Caco-2 (cell line): ENCODE measurements at regions of chr5 and their contacts with region 1.

Region 1: DNA sequence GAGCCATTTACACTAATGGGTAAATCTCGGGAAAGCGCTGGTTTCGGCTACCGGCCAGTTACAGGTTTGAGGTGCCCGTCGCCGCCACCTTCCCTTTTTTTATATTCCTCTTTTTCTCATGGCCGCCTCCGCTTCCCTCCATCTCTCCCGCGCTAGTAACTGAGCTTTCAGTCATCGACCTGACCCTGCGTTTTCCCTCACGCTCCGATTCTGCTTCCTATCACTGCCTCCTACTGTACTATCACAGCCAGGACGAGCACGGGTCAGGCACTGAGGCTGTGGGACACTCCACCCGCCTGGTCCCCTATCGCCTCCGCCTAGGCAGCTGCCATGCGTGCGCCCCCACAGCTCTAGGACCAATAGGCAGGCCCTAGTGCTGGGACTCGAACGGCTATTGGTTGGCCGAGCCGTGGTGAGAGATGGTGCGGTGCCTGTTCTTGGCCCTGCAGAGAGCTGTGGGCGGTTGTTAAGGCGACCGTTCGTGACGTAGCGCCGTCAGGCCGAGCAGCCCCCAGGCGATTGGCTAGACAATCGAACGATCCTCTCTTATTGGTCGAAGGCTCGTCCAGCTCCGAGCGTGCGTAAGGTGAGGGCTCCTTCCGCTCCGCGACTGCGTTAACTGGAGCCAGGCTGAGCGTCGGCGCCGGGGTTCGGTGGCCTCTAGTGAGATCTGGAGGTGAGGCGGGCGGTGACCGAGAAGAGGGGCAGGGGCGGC is at the start of gene HMGCR:
- DNase-seq: peak; percentile 99 to 100
- H3K4me3 ChIP-seq: peak within 1 kb of the TSS; percentile 89
- H3K4me3 Mint-ChIP-seq: no peak within 1 kb of the TSS
- H3K27ac Mint-ChIP-seq: no peak within 1 kb of the TSS
- H3K4me1 ChIP-seq: peaks cover 28% of the 10 kb centered on the region
- H3K4me1 Mint-ChIP-seq: peaks cover 14% of the 10 kb centered on the region
- H3K27me3 ChIP-seq: no peaks in the 10 kb centered on the region
- H3K27me3 Mint-ChIP-seq: no peaks in the 10 kb centered on the region
- CTCF ChIP-seq: peak in 1 of 2 experiments; percentile 59
- total RNA-seq, gene HMGCR: 164 and 167 TPM in 2 replicates

Region 2: DNA sequence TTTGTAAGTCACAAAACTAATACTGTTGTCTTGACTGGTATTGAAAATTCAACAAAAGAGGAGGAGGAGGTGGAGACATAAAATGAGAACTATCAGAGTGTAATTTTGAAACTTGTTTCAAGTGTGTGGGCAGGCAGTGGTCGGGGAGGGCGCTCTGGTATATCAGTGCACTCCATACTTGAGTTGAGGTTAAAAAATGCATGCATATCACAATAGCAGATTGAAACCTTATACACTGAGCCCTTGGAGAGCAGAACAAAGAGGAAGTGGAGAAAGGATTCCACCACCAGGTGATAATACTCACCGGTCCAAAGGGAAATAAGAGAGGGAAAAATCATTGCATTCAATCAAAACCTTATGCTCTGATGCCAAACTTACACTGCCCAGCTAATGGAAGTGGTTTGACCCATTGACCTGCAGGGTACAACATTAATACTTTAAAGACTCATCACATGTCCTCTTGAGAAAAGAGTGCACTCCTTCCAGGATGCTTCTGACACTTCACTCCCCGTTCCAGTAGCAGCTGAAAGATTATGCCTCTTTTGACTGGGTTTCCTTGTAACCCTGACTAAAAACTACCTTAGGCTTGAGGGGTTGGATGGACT is 391.1 kb before region 1 on chr5:
- CTCF ChIA-PET with region 1: no interaction called
- POLR2A ChIA-PET with region 1: interaction called, 8 read pairs
- intact Hi-C with region 1: loop called (anchors 10 kb)
- DNase-seq: no peak
- H3K4me3 ChIP-seq: no peak overlapping the region
- H3K4me3 Mint-ChIP-seq: no peak overlapping the region
- H3K27ac Mint-ChIP-seq: no peak overlapping the region
- H3K4me1 ChIP-seq: peaks cover 74% of the 10 kb centered on the region
- H3K4me1 Mint-ChIP-seq: peaks cover 58% of the 10 kb centered on the region
- H3K27me3 ChIP-seq: no peaks in the 10 kb centered on the region
- H3K27me3 Mint-ChIP-seq: no peaks in the 10 kb centered on the region
- CTCF ChIP-seq: no peak

Region 3: DNA sequence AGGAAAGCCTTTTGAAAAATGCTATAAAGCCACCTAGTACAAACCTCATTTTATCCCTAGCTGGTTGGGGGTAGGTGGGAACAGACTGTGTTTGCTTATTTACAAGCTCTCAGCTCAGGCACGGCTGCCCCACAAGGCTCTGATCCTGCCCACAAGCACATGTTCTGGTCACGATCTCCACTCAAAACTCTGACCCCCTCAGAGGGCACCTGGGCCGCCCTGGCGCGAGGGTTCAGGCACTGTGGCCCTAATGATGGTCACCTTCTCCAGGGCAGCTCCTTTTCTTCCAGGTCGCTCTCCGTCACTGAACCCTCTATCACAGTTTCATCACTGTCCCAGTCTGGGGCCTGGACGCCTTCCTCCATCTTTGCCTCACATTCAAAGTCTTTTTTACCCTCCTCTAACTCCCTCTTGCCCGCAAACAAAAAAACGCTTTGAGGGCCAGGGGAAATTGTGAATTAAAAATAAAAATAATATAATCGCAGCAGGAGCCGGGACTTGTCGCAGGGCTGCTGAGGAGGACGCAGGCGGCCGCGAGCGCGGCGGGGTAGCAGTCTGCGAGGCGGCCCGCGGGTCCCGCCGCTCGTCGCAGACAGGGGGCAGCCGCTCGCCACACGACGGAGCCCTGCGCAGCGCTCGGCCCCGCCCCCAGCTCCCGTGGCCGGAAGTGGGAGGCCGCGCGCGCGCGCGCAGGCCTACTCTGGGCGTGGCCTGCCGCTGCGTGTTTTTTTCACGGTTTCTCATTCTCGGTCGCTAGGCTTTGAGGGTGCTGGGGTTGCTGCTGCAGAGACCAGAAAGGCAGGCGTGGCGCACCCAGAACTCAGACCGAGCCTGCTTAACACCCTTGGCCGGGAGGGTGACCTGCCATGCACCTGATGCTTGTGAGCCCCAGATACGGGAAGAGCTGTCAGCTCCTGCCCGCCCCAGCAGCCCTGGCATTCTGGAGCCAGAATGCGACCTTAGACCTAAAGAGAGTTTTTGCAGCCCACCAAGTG is 100.2 kb before region 1 on chr5 and contains the start of gene ANKRD31:
- CTCF ChIA-PET with region 1: interaction called, 40 read pairs
- POLR2A ChIA-PET with region 1: interaction called, 19 read pairs
- intact Hi-C with region 1: loop called (anchors 1 kb)
- DNase-seq: peak; percentile 72 to 90
- H3K4me3 ChIP-seq: peak within 1 kb of the TSS; percentile 91
- H3K4me3 Mint-ChIP-seq: peak within 1 kb of the TSS; percentile 80
- H3K27ac Mint-ChIP-seq: peak within 1 kb of the TSS; percentile 82
- H3K4me1 ChIP-seq: peaks cover 24% of the 10 kb centered on the region
- H3K4me1 Mint-ChIP-seq: peaks cover 8% of the 10 kb centered on the region
- H3K27me3 ChIP-seq: no peaks in the 10 kb centered on the region
- H3K27me3 Mint-ChIP-seq: no peaks in the 10 kb centered on the region
- CTCF ChIP-seq: peak; percentile 38 to 86
- total RNA-seq, gene ANKRD31: 0.66 and 0.79 TPM in 2 replicates

Region 4: DNA sequence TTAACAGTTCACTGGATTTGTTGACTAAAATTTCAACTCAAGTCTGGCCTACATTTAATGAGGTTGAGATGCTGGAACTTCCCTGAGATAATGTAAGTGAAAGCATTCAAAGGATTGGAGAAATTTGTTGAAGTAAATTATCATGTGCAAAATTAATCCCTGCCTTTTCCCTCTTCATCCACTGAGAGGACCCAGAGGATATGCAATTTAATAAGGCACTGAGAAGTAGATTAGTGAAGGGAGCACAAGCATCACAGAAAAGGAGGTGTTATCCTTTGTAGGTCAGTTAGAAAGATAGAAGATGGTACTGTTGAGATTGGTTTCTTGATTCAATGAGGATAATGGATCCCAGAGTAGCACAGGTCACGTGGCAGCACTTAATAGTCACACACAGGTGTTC is 57.5 kb before region 1 on chr5:
- CTCF ChIA-PET with region 1: interaction called, 3 read pairs
- POLR2A ChIA-PET with region 1: no interaction called
- intact Hi-C with region 1: loop called (anchors 1 kb)
- DNase-seq: no peak
- H3K4me3 ChIP-seq: no peak overlapping the region
- H3K4me3 Mint-ChIP-seq: no peak overlapping the region
- H3K27ac Mint-ChIP-seq: no peak overlapping the region
- H3K4me1 ChIP-seq: no peaks in the 10 kb centered on the region
- H3K4me1 Mint-ChIP-seq: no peaks in the 10 kb centered on the region
- H3K27me3 ChIP-seq: no peaks in the 10 kb centered on the region
- H3K27me3 Mint-ChIP-seq: no peaks in the 10 kb centered on the region
- CTCF ChIP-seq: no peak

Region 5: GRCh38 chr5:75395277-75395676 is 58.5 kb after region 1 on chr5:
- CTCF ChIA-PET with region 1: no interaction called
- POLR2A ChIA-PET with region 1: no interaction called
- intact Hi-C with region 1: no loop called
- DNase-seq: no peak
- H3K4me3 ChIP-seq: no peak overlapping the region
- H3K4me3 Mint-ChIP-seq: no peak overlapping the region
- H3K27ac Mint-ChIP-seq: no peak overlapping the region
- H3K4me1 ChIP-seq: 0 out of 2 replicates have a peak, but pooled peaks cover 5% of the 10 kb centered on the region
- H3K4me1 Mint-ChIP-seq: no peaks in the 10 kb centered on the region
- H3K27me3 ChIP-seq: no peaks in the 10 kb centered on the region
- H3K27me3 Mint-ChIP-seq: no peaks in the 10 kb centered on the region
- CTCF ChIP-seq: no peak

Region 6: GRCh38 chr5:75412111-75412990 is 75.6 kb after region 1 on chr5:
- CTCF ChIA-PET with region 1: no interaction called
- POLR2A ChIA-PET with region 1: no interaction called
- intact Hi-C with region 1: no loop called
- DNase-seq: peak in 1 of 2 experiments; percentile 4
- H3K4me3 ChIP-seq: no peak overlapping the region
- H3K4me3 Mint-ChIP-seq: no peak overlapping the region
- H3K27ac Mint-ChIP-seq: no peak overlapping the region
- H3K4me1 ChIP-seq: no peaks in the 10 kb centered on the region
- H3K4me1 Mint-ChIP-seq: peaks cover 9% of the 10 kb centered on the region
- H3K27me3 ChIP-seq: no peaks in the 10 kb centered on the region
- H3K27me3 Mint-ChIP-seq: no peaks in the 10 kb centered on the region
- CTCF ChIP-seq: no peak

Region 7: DNA sequence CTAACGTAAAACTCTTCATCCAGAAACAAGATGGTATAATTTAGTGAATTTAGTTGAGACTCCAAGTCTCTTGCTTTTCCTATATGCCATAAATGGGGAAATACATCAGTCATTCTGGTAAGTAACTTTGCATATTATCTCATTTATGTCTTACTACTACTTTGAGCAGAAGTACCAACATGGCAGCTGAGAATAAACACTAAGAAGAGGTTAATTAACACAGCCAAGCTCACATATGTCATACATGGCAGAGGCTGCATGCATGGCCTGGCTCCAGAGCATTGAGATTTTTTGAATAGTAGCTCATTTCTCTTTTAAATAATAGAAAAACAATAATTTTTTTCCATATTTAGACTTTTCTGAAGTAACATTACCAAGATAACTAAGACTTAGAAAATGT is 120.4 kb after region 1 on chr5:
- CTCF ChIA-PET with region 1: no interaction called
- POLR2A ChIA-PET with region 1: interaction called, 14 read pairs
- intact Hi-C with region 1: no loop called
- DNase-seq: no peak
- H3K4me3 ChIP-seq: no peak overlapping the region
- H3K4me3 Mint-ChIP-seq: peak overlapping the region; percentile 63
- H3K27ac Mint-ChIP-seq: no peak overlapping the region
- H3K4me1 ChIP-seq: peaks cover 17% of the 10 kb centered on the region
- H3K4me1 Mint-ChIP-seq: peaks cover 18% of the 10 kb centered on the region
- H3K27me3 ChIP-seq: no peaks in the 10 kb centered on the region
- H3K27me3 Mint-ChIP-seq: no peaks in the 10 kb centered on the region
- CTCF ChIP-seq: no peak

Region 8: GRCh38 chr5:75547812-75548211 is 211.0 kb after region 1 on chr5:
- CTCF ChIA-PET with region 1: no interaction called
- POLR2A ChIA-PET with region 1: no interaction called
- intact Hi-C with region 1: no loop called
- DNase-seq: no peak
- H3K4me3 ChIP-seq: no peak overlapping the region
- H3K4me3 Mint-ChIP-seq: no peak overlapping the region
- H3K27ac Mint-ChIP-seq: no peak overlapping the region
- H3K4me1 ChIP-seq: no peaks in the 10 kb centered on the region
- H3K4me1 Mint-ChIP-seq: no peaks in the 10 kb centered on the region
- H3K27me3 ChIP-seq: no peaks in the 10 kb centered on the region
- H3K27me3 Mint-ChIP-seq: no peaks in the 10 kb centered on the region
- CTCF ChIP-seq: no peak